MCF 10A (cell line): ENCODE measurements at regions of chr2 and their contacts with region 1.

Region 1: DNA sequence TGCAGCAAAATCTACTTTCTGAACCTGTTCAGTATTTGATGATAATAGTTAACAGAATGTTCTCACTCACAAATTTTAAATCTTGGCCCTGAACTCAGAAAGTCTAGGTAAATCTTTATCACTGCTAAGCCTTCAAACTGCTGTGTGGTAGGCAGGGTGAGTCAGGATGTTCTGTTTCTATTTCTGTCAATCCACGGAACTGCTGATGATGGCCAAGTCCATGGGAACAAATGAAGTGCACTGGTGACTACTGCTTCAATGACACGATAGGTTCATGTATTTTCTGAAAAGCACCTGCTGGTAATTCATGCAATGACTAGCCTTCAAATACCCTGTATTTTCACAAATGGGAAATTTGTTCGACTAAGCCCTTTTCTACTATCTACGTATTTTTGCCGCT is 14.2 kb downstream of the NIFK start:
- DNase-seq: peak; percentile 72
- H3K4me3 Mint-ChIP-seq: peak overlapping the region; percentile 60
- H3K27ac Mint-ChIP-seq: peak overlapping the region; percentile 87
- H3K4me1 Mint-ChIP-seq: peaks cover 13% of the 10 kb centered on the region
- H3K27me3 Mint-ChIP-seq: no peaks in the 10 kb centered on the region
- CTCF ChIP-seq: no peak

Region 2: GRCh38 chr2:121088251-121089165 is 634.0 kb before region 1 on chr2:
- CTCF ChIA-PET with region 1: interaction called, 10 read pairs
- POLR2A ChIA-PET with region 1: no interaction called
- intact Hi-C with region 1: loop called (anchors 10 kb)
- DNase-seq: no peak
- H3K4me3 Mint-ChIP-seq: no peak overlapping the region
- H3K27ac Mint-ChIP-seq: no peak overlapping the region
- H3K4me1 Mint-ChIP-seq: peaks cover under 1% of the 10 kb centered on the region
- H3K27me3 Mint-ChIP-seq: no peaks in the 10 kb centered on the region
- CTCF ChIP-seq: no peak

Region 3: DNA sequence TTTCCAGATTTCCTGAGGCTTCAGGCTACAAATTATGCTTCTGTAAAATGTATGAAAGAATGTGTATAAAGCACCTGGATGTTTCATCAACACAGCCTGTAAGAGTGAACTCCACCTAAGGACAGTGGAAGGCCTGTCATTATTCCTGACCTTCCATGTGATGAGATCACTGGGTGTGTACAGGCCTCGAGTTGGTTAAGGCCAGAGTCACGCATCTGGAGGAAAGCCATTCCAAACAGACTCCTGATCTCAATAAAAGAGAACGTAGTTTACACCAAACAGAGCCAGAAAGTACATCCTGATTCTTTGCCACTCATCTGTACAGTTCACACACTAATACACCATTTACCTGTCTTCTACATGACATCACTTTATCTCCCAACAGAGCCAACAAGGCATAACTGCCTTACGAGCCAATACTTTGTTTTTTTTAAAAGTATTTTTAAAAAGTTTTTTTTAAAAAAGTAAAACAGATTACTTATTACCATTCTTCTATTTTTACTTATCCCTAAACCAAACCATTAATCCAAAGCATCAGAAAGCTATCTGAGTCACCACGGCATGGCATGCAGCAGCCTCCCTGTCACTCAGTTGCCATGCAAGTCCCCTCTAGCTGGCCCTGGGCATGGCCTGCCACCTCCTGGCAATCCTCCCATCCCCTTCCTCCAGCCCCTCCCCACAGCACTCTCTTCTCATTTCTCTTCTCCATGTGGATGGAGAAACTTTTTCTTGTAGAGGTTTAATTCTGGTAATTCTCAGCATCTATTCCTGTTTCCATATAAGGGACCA is 358.7 kb before region 1 on chr2:
- CTCF ChIA-PET with region 1: no interaction called
- POLR2A ChIA-PET with region 1: no interaction called
- intact Hi-C with region 1: loop called (anchors 1 kb)
- DNase-seq: peak; percentile 77
- H3K4me3 Mint-ChIP-seq: peak overlapping the region; percentile 18
- H3K27ac Mint-ChIP-seq: peak overlapping the region; percentile 95
- H3K4me1 Mint-ChIP-seq: peaks cover 49% of the 10 kb centered on the region
- H3K27me3 Mint-ChIP-seq: no peaks in the 10 kb centered on the region
- CTCF ChIP-seq: no peak

Region 4: DNA sequence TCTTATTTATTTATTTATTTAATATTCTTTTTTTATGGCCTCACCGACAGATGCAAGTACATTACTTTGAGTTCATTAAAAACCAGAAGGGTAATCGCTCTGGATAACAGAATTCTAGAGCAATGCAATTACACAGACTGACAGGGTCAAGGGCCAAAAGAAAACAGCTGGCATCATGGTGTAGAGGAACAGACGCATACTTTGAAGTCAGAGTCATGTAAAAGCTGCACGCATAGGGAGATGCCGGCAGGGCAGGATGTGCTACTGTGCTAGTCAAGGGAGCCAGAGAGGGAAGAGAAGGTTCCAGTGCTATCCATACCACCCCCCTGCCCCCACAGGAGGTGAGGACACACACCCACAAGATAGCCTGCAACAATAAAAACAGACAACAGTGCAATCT is 322.3 kb before region 1 on chr2:
- CTCF ChIA-PET with region 1: interaction called, 4 read pairs
- POLR2A ChIA-PET with region 1: no interaction called
- intact Hi-C with region 1: loop called (anchors 2 kb)
- DNase-seq: no peak
- H3K4me3 Mint-ChIP-seq: no peak overlapping the region
- H3K27ac Mint-ChIP-seq: no peak overlapping the region
- H3K4me1 Mint-ChIP-seq: no peaks in the 10 kb centered on the region
- H3K27me3 Mint-ChIP-seq: no peaks in the 10 kb centered on the region
- CTCF ChIP-seq: no peak

Region 5: DNA sequence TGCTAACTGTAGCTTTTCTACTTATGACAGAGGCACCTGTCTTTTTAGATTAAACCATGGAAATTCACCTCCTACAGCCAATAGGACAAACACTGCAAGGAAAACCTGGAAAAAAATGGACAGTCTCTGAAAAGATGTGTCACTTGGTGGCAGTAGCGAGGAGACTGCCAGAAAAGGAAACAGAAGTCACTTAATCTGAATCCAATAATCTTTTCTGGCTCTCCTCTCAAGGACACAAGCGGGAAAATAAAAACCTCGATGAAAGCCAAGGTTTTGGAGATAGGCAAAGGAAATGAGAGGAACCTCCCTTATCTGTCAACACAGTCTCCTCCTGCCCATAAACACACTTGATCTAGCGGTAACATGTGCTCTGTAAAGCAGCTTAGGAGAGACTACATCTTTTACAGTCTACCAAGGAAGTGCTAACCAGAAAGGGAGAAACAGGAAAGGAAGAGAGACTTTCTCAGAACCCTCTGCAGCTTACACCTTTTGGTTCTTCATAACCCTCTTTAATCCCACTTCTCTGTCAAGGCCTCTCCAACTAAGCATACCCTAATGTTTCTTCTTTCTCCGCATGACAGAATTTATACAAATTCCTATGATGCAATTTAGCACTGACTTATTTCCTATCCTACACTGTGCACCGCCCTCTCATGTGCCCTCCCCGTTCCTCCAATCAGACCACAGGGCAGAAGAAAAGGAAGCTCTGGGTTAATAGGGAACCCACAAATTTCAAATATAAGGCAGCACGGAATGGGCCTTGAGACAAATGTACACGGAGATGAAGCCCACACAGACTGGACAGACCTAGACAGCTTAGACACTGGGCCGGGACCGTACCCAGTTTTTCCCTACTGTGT is 126.0 kb before region 1 on chr2:
- CTCF ChIA-PET with region 1: interaction called, 4 read pairs
- POLR2A ChIA-PET with region 1: interaction called, 3 read pairs
- intact Hi-C with region 1: loop called (anchors 1 kb)
- DNase-seq: peak; percentile 65
- H3K4me3 Mint-ChIP-seq: no peak overlapping the region
- H3K27ac Mint-ChIP-seq: peak overlapping the region; percentile 55
- H3K4me1 Mint-ChIP-seq: peaks cover 23% of the 10 kb centered on the region
- H3K27me3 Mint-ChIP-seq: no peaks in the 10 kb centered on the region
- CTCF ChIP-seq: peak; percentile 36

Region 6: DNA sequence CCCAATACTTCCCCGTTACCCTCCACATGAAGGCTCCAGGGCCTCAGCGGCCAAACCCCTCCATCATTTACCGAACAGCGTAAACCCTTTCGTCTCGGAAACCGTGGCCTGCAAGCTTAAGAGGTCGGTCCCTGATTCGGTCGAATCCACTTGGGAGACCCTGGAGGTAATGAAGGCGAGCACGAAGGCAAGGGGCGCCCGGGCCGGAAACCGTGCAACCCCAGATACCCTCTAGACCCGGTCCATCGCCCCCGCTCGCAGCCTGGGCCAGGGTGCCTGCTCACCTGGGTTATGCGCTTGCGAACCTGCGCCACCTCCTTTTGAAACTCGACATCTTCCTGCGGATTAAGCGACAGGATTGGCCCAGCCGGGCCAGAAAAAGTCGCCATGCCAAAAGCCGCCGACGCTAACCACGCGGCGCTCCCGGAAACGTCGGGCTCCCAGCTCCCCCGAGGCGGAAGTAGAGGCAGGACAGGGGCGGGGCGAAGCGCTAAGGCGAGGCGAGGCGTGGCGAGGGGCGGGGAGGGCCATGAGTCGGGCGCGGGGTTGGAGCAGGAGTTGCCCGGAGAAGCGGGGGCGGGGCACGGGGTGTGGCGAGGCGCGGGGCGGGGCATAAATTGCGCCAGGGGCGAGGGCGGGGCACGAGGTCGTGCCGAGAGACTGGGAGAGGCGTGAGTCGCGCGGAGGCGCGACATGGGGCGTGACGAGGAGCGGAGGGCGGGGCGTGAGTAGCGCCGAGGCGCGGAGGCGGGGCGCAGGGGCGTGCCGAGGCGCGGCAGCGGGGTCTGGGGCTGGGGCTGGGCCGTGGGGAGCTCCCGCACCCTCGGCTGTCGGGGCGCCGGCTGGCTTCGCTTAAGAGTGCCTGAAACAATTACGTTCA is 14.2 kb after region 1 on chr2 and contains the start of gene NIFK:
- CTCF ChIA-PET with region 1: interaction called, 5 read pairs
- POLR2A ChIA-PET with region 1: interaction called, 32 read pairs
- intact Hi-C with region 1: no loop called
- DNase-seq: peak; percentile 98
- H3K4me3 Mint-ChIP-seq: peak within 1 kb of the TSS; percentile 95
- H3K27ac Mint-ChIP-seq: peak within 1 kb of the TSS; percentile 90
- H3K4me1 Mint-ChIP-seq: peaks cover 7% of the 10 kb centered on the region
- H3K27me3 Mint-ChIP-seq: no peaks in the 10 kb centered on the region
- CTCF ChIP-seq: no peak
- total RNA-seq, gene NIFK: 111 and 171 TPM in 2 replicates

Region 7: DNA sequence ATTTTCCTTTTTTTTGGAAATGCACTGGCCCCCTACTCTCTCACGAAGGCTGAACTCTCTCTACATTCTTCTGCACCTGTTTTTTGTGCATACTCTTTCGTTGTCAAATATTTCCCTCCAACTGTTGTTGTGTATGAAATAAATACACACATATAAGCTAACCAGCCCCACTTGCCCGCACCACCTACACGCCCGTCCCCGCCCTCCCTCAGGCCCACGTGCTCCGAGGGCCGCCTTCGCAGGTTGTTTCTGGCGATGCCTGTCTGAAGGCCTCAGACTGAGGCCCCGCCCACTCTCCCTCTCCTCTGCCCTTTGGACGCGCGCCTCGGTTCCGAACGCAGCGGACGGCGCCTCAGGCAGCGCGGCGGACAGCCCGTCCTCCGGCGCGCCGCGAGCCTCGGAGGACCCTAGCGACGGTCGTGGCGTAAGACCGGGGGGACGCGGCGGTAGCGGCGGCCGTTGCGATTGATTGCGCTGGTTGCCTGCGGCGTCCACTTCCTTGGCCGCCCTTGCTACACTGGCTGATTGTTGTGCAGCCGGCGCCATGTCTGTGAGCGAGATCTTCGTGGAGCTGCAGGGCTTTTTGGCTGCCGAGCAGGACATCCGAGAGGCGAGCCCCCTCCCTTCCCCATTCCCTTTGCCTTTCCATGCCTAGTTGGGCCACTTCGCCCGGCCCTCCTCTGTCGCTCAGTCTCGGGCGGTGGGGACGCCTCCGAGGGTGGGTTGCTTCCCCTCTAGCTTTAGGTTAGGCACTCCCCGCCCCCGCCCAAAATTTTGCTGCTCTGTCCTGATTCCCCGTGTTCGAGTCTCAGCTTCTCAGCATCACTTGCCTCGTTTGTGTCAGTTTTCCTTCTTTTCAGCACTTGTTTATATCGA is 33.0 kb after region 1 on chr2 and contains the start of gene TSN:
- CTCF ChIA-PET with region 1: interaction called, 3 read pairs
- POLR2A ChIA-PET with region 1: interaction called, 8 read pairs
- intact Hi-C with region 1: loop called (anchors 1 kb)
- DNase-seq: peak; percentile 98
- H3K4me3 Mint-ChIP-seq: peak within 1 kb of the TSS; percentile 79
- H3K27ac Mint-ChIP-seq: peak within 1 kb of the TSS; percentile 91
- H3K4me1 Mint-ChIP-seq: peaks cover 6% of the 10 kb centered on the region
- H3K27me3 Mint-ChIP-seq: no peaks in the 10 kb centered on the region
- CTCF ChIP-seq: no peak
- total RNA-seq, gene TSN: 60.7 and 78.2 TPM in 2 replicates